KBM-7 (cell line): ENCODE measurements at regions of chr2 and their contacts with region 1.

Region 1: DNA sequence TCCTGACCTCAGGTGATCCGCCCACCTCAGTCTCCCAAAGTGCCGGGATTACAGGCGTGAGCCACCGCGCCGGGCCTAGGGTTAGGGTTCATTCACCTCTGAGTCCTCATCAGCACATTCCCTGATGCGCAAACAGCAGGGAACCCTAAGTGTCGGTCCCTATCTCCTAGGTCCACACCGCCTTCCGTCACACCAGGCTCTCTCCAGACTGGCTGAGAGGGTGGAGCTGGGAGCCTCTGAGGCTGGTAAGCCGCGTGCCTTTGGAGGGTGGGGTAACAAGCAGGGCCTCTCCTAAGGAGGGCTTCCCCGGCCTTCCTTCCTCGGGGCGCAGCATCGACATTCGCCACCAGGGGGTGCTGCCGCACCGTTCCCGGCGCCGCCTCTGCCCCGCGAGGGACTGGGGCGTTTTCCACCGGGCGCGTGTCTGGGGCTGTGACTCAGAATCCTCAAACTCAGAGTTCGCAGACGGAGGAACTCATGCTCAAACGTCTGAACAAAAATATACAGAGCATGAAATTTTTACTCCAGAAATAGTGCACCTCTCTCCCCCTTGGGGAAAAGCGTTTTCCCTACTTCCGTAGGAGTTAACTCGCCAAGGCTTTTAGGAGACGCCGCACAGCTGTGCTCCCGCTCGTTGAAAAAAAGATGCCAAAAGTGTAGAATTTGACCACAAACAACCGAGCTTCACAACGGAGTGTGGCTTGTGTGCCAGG is 63.9 kb upstream of the ASAP2 start:
- DNase-seq: peak; percentile 88

Region 2: GRCh38 chr2:9333591-9334171 is 191.0 kb after region 1 on chr2:
- in situ Hi-C with region 1: loop called (anchors 25 kb)
- DNase-seq: peak; percentile 68